Cardiac septum (tissue), 1 donor: ENCODE measurements at regions of chr16 and their contacts with region 1.

Region 1: DNA sequence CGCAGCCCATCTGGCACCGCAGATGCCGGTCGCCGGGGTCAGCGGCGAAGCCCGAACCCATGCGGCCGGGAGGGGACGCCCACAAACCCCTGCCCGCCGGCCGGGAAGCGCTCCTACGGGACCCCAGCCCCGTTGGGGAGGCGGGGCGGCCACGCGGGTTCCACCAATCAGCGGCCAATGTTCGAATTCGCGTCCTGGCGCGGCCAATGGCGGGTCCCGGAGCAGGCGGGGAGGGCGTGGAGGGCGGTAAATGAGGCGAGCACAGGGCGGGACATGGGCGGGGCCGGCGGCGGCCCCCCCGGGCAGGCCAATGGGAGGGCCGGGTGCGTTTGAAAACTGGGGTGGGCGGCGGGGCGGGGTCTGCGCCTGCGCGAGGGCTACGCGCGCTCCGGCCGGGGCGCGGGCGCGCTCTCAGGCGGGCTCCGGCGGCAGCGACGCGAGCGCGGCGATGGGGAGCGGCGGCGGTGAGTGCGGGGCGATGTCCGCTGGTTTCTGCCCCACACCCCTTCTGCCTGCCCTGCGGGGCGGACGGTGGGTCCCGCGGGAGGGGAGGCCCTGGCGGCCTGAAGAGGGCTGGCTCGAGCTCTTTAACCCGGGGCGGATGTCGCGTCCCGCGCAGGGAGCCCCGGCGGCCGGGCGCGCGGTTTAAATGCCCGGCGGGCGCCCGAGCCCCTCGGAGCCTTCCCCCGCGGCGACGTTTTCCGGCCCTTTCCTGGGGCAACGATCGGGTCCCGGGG is at the start of gene CCNF:
- DNase-seq: peak; percentile 99
- total RNA-seq, gene CCNF: 0.86 TPM

Region 2: GRCh38 chr16:2482707-2483534 is 53.7 kb after region 1 on chr16:
- intact Hi-C with region 1: no loop called
- DNase-seq: no peak

Region 3: DNA sequence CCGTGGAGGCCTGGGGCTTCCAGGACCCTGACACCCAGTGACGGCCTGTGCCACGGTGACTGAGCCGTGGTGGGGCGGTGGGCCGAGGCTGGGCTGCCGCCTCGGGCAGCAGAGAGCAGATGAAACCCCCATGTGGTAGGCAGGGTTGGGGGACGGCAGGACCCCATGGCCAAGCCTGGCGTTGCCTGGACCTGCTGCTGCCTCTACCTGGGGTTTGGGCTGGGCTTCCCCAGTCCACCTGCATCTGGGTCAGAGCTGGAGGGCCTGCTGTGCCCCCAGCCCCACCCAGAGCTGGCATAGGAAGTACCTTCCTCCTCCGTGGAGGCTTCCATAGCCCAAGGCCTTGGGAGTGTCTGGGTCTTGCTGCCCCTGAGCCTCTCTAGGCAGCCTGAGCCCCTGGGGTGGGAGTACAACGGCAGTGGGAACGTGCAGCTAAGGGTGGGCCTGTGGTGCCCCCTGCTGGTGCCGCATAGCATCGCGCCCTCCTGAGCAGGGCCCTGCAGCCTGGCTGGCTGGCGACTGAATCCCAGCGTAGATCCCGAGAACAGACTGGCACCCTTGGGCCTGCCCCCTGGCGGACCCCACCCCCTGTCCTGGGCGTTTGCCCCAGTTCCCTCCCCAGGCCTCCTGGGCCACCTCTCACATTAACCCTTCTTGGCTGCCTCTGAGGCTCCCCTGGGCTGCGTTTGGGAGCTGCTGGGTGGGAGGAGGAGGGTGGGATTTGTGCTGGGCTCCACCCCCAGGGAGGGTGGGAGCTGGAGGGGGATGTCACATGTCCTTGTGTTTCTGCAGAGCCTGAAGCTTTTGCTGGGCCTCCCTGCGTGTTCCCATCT is 71.9 kb after region 1 on chr16:
- intact Hi-C with region 1: loop called (anchors 5 kb)
- DNase-seq: peak; percentile 91

Region 4: GRCh38 chr16:2663553-2664546 is 234.6 kb after region 1 on chr16:
- intact Hi-C with region 1: no loop called
- DNase-seq: no peak